HEK293 (cell line): ENCODE measurements at regions of chr1 and their contacts with region 1.

Region 1: DNA sequence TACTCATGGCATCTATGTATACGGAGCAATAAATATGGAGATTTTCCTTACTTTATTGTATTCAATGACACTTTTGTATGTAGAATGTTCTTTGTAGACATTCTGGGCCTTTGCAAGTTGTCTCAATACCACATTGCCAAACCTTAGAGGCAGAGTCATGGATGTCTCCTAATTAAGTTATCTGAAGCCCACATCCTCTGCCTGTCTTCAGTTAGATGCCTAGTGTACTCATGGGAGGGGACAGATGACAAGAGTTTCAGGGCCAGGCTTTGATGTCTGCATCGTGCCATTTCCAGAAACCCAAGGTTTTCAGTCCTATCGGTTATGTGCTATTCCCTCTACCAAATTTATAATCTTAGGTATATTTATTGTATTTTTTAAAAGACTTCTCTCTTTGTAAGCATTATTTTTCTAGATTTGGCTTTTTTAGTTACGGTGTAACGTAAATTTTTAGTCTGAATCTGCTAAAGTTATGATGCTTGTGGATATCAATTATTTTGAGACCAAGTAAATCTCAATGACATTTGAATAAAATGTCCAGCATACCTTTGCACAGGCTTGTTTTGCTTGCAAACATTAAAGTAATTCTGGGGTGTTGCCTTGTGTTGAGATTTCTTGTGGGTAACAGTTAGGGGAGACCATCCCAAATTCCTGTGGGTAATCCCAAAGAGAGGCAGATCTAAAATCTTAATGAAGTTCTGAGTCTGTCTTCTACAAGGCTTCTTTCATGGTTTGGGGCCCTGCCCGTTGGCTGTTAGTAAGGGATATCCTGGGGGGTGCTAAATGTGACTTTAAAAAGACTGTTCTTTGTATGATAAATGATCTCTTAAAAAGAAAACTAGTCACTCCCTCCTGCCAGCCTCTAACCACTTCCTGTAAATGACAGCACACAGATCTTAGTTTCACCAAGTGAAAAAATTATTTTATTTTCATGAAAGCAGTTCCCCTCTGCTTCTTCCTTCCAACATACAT is 8.0 kb upstream of the MACF1 start:
- H3K4me3 ChIP-seq: no peak overlapping the region
- H3K27ac ChIP-seq: no peak overlapping the region
- H3K4me1 ChIP-seq: peaks cover 10% of the 10 kb centered on the region
- CTCF ChIP-seq: no peak

Region 2: GRCh38 chr1:38741341-38741740 is 455.2 kb before region 1 on chr1:
- CTCF ChIA-PET with region 1: no interaction called
- POLR2A ChIA-PET with region 1: no interaction called
- H3K4me3 ChIP-seq: no peak overlapping the region
- H3K27ac ChIP-seq: no peak overlapping the region
- H3K4me1 ChIP-seq: no peaks in the 10 kb centered on the region
- CTCF ChIP-seq: no peak

Region 3: DNA sequence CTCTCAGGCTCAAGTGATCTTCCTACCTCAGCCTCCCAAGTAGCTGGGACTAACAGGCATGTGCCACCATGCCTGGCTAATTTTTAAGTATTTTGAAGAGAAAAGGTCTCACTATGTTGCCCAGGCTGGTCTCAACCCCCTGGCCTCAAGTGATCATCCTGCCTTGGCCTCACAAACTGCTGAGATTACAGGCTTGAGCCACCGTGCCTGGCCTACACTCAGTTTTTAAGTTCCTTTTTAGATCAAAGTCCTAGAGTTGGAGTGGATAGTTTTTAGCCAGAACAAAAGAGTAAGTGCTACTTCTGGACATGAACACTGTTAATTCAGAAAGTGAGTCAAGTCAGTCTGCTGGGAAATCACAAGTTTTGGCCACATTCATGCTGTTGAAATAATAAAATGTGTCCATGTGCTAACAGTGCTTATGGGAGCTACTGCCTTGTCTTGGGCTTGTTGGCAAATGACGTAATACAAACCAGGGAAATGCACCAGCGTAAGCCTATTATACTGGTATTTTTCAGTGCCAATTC is 86.1 kb before region 1 on chr1:
- CTCF ChIA-PET with region 1: interaction called, 46 read pairs
- POLR2A ChIA-PET with region 1: interaction called, 14 read pairs
- H3K4me3 ChIP-seq: no peak overlapping the region
- H3K27ac ChIP-seq: no peak overlapping the region
- H3K4me1 ChIP-seq: peaks cover 9% of the 10 kb centered on the region
- CTCF ChIP-seq: no peak

Region 4: GRCh38 chr1:39142401-39143151 is 54.0 kb before region 1 on chr1:
- CTCF ChIA-PET with region 1: interaction called, 13 read pairs
- POLR2A ChIA-PET with region 1: no interaction called
- H3K4me3 ChIP-seq: no peak overlapping the region
- H3K27ac ChIP-seq: no peak overlapping the region
- H3K4me1 ChIP-seq: peaks cover 5% of the 10 kb centered on the region; the same call in 1 of the 2 replicates
- CTCF ChIP-seq: no peak

Region 5: DNA sequence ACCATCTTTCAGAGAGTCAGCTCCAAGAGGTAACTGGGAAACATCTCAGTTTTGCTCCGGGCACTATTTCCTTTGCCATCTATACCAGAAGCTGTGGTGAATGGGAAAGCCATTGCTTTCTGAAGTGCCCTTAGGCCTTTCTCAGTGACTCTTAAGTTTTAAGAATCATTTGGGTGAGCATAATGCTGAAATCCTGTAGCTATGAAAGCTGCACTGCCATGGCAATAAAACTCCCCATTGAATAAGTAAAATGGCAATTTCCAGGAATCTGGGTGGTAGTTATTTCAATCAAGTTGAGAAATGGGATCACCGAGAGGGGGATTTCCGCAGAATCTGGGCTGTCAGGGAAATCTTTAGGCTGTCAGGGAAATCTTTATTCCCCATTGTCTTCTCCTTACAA is 18.8 kb before region 1 on chr1:
- CTCF ChIA-PET with region 1: interaction called, 20 read pairs
- POLR2A ChIA-PET with region 1: no interaction called
- H3K4me3 ChIP-seq: no peak overlapping the region
- H3K27ac ChIP-seq: no peak overlapping the region
- H3K4me1 ChIP-seq: peaks cover 13% of the 10 kb centered on the region
- CTCF ChIP-seq: no peak

Region 6: DNA sequence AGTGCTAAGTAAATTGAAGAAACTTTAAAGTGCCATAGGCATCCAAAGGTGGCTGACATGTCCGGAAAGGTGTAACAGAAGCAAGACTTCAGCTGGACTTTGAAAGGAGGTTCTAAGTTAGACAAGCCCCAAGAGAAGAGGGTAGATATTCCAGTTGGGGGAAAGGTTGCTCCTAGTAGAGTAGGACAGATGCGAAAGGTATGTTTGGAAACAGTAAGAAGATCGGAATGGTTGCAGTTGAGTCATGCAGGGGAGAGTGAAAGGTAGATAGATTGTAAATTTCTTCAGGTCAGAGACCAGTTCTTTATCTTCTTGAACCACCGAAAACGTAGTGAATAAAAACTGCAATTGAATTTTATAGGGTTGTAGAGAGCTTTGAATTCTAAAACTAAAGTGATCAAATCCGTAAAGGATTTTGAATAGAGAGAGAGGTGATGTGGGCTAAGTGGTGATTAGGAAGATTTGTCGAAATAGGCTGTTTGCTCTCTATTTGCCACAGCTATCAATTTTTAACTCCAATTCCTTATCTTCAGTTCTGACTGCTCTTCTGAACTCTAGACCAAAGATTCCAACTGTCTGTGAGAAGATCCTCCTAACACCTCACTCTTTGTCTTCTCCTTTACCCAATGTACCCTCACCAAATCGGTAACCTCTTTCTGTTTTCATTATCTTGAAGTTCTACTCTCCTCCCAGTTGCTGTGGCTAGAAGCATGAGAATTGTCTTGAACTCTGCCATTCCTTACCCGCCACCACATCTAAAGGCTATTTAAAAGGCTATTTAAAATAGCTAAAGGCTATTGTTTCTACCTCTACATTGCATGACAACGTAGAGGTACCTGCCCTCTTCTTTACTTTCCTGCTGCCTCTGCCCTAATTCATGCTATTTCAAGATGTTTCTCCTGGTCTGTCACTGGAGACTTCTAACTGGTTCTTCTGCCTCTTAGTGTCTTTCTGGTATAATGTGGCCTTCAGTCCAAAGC is 24.7 kb after region 1 on chr1:
- CTCF ChIA-PET with region 1: interaction called, 42 read pairs
- POLR2A ChIA-PET with region 1: no interaction called
- H3K4me3 ChIP-seq: no peak overlapping the region
- H3K27ac ChIP-seq: no peak overlapping the region
- H3K4me1 ChIP-seq: no peaks in the 10 kb centered on the region
- CTCF ChIP-seq: no peak

Region 7: GRCh38 chr1:39317111-39317510 is 120.6 kb after region 1 on chr1:
- CTCF ChIA-PET with region 1: no interaction called
- POLR2A ChIA-PET with region 1: no interaction called
- H3K4me3 ChIP-seq: no peak overlapping the region
- H3K27ac ChIP-seq: no peak overlapping the region
- H3K4me1 ChIP-seq: no peaks in the 10 kb centered on the region
- CTCF ChIP-seq: no peak

Region 8: GRCh38 chr1:39378377-39378776 is 181.8 kb after region 1 on chr1:
- CTCF ChIA-PET with region 1: interaction called, 11 read pairs
- POLR2A ChIA-PET with region 1: no interaction called
- H3K4me3 ChIP-seq: no peak overlapping the region
- H3K27ac ChIP-seq: no peak overlapping the region
- H3K4me1 ChIP-seq: no peaks in the 10 kb centered on the region
- CTCF ChIP-seq: peak; percentile 37; the same call in 1 of the 2 replicates